ENCODE measurements at regions of chr2 and their contacts with region 1.

Region 1: GRCh38 chr2:7037340-7038333 is 120.4 kb downstream of the RNF144A start:
- DNase-seq: no peak
- H3K4me3 ChIP-seq: no peak overlapping the region
- H3K27ac ChIP-seq: no peak overlapping the region
- H3K4me1 ChIP-seq: no peaks in the 10 kb centered on the region
- H3K27me3 ChIP-seq: no peaks in the 10 kb centered on the region
- CTCF ChIP-seq: peak; percentile 23 to 61 (median 56)
- POLR2A ChIP-seq: no peak

Region 2: GRCh38 chr2:6917071-6917760 is 120.4 kb before region 1 on chr2 and contains the start of gene RNF144A:
- intact Hi-C with region 1: loop called (anchors 10 kb)
- DNase-seq: no peak
- H3K4me3 ChIP-seq: peak within 1 kb of the TSS; percentile 55 to 89 (median 78)
- H3K27ac ChIP-seq: peak within 1 kb of the TSS; percentile 55 to 83 (median 78)
- H3K4me1 ChIP-seq: peaks cover 0 to 45% (median 3%) of the 10 kb centered on the region in 3 donors
- H3K27me3 ChIP-seq: peaks cover 0 to 5% (median 0%) of the 10 kb centered on the region in 4 donors
- CTCF ChIP-seq: peak in 5 of 6 experiments; percentile 32 to 64 (median 41)
- POLR2A ChIP-seq: peak in 1 of 4 donors; percentile 24
- total RNA-seq, gene RNF144A: 6.2 to 11.6 (median 8.2) TPM

Region 3: DNA sequence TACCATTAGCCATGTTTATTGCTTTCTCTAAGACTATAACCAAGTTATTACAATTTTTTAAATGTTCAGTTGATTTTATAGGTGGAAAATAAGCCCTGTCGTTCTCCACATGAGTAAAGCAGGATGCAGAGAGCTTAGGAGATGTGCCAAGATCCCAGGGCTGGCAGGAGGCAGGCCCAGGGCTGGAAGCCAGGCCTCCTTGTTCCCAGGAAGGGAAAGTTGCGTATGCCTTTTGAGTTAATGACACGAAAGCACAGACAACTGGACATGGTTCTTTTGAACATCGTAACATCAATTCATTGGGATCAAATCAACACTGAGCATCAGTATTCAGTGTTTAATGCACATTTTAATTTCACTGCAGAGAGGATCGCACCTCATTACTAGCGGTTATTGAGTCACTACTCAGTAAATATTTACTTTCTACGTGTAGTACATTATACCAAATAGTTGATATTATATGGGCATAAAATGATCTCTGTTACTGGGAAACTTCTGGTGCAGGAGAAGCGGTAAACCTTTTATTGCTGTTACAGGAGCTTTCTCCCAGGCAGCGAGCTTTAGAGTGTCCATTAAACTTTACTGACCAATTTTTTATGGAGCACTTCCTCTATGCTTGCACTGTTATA is 60.4 kb before region 1 on chr2:
- intact Hi-C with region 1: no loop called
- DNase-seq: no peak
- H3K4me3 ChIP-seq: no peak overlapping the region
- H3K27ac ChIP-seq: no peak overlapping the region
- H3K4me1 ChIP-seq: peaks cover 0 to 10% (median 0%) of the 10 kb centered on the region in 3 donors
- H3K27me3 ChIP-seq: no peaks in the 10 kb centered on the region
- CTCF ChIP-seq: no peak
- POLR2A ChIP-seq: no peak

Region 4: GRCh38 chr2:7609974-7610373 is 572.3 kb after region 1 on chr2:
- intact Hi-C with region 1: no loop called
- DNase-seq: no peak
- H3K4me3 ChIP-seq: no peak overlapping the region
- H3K27ac ChIP-seq: no peak overlapping the region
- H3K4me1 ChIP-seq: no peaks in the 10 kb centered on the region
- H3K27me3 ChIP-seq: peaks cover 0 to 7% (median 0%) of the 10 kb centered on the region in 4 donors
- CTCF ChIP-seq: no peak
- POLR2A ChIP-seq: no peak

Measured in esophagus squamous epithelium (tissue), 5 donors.